ENCODE measurements at regions of chr9 and their contacts with region 1.

Region 1: GRCh38 chr9:111896353-111896958 is at the start of gene UGCG:
- H3K4me3 Mint-ChIP-seq: peak within 1 kb of the TSS; percentile 89
- H3K27ac Mint-ChIP-seq: no peak within 1 kb of the TSS
- H3K4me1 Mint-ChIP-seq: peaks cover 4% of the 10 kb centered on the region
- H3K27me3 Mint-ChIP-seq: peaks cover 8% of the 10 kb centered on the region

Region 2: GRCh38 chr9:111752455-111752854 is 144.0 kb before region 1 on chr9:
- intact Hi-C with region 1: loop called (anchors 5 kb)
- H3K4me3 Mint-ChIP-seq: no peak overlapping the region
- H3K27ac Mint-ChIP-seq: no peak overlapping the region
- H3K4me1 Mint-ChIP-seq: no peaks in the 10 kb centered on the region
- H3K27me3 Mint-ChIP-seq: no peaks in the 10 kb centered on the region

Region 3: DNA sequence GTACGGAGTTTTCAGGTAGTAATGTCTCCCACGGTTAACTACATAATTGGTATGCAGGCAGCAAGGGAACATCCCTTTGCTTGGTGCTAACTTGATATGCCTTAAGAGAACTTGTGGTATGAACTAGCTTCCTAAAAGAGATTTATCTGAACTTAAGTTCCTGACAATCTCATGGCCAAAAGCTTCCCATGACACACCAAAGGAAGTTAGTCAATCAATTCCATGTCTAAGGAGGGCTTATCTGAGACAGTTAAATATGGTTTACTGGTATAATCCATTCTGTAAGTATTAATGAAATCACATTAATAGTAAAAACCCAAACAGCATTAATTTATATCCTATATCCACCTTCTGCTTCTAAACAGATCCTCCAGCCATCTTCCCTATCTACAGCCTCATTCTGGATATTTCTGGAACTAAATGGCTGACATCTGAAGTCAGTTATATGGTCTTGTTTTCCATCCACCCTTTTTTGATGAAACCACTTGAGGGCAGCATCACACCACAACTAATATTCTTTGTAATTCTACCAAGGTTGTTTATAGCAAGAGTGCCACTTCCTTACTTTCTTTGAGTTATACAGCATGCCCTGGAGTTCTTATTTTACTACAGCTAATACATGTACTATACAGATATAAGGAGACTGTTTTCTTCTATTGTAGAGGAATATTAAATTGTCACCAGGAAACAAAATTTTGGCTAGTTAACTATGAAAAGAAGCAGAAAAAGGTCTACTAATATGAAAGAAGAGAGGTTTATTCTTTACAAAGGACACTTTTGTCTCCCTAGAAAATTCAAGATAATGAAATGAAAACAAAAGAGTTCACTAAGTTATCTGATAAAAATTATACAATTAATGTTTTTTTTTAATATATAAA is 136.5 kb before region 1 on chr9:
- intact Hi-C with region 1: loop called (anchors 5 kb)
- H3K4me3 Mint-ChIP-seq: no peak overlapping the region
- H3K27ac Mint-ChIP-seq: no peak overlapping the region
- H3K4me1 Mint-ChIP-seq: no peaks in the 10 kb centered on the region
- H3K27me3 Mint-ChIP-seq: no peaks in the 10 kb centered on the region

Region 4: DNA sequence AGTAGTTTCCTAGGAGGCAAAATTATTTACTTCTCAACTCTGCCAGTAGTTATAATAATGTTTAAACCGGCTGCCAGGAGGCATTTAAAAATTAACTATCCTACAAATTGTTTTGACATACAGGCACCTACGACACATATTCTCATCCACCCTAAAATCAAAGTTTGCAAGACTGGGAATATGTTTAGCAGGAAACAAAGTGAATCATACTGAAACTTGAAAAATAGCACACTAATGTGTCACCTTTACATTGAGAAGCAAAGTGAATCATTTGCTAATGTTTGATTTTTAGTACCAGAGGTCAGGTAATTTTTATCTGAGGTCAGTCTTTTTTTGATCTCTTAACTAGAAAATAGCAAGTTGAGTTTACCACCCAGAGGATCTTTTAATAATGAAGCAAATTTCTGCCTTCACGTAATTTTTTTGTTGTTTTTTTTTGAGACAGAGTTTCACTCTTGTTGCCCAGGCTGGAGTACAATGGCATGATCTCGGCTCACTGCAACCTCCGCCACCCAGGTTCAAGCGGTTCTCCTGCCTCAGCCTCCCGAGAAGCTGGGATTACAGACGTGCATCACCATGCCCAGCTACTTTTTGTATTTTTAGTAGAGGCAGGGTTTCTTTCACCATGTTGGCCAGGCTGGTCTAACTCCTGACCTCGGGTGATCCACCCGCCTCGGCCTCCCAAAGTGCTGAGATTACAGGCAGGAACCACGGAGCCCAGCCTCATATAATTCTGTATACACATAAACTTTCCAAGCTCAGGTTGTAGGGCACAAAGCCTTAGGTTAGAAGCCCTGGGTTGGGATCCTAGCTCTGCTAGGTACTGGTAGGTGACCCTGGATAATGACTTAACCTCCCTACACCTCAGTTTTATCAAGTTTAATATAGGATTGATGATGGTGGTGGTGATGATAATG is 124.5 kb after region 1 on chr9:
- intact Hi-C with region 1: no loop called
- H3K4me3 Mint-ChIP-seq: no peak overlapping the region
- H3K27ac Mint-ChIP-seq: no peak overlapping the region
- H3K4me1 Mint-ChIP-seq: peaks cover 24% of the 10 kb centered on the region
- H3K27me3 Mint-ChIP-seq: peaks cover 1% of the 10 kb centered on the region

Region 5: GRCh38 chr9:112333639-112334431 is 437.4 kb after region 1 on chr9:
- intact Hi-C with region 1: loop called (anchors 2 kb)
- H3K4me3 Mint-ChIP-seq: peak overlapping the region; percentile 86
- H3K27ac Mint-ChIP-seq: peak overlapping the region; percentile 85
- H3K4me1 Mint-ChIP-seq: peaks cover 17% of the 10 kb centered on the region
- H3K27me3 Mint-ChIP-seq: peaks cover 3% of the 10 kb centered on the region